ENCODE measurements at regions of chr17 and their contacts with region 1.

Region 1: DNA sequence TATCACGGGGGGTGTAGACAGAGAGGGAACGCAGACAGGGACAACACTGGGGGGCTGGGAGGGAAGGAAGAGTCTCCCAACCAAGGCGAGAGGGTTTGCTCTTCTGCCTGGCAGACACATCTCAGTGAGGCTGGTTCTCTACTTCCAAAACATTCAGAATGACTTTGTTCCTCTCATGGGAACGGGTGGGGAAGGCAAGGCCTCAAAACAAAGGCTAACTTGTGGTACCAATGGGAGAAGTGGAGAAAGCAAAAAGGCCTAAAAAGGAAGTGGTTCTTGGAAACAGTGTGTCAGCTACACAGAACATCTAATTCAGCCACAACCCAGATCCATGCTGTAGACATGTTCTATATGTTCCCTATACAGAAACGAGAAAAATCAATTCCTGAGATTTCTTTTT is 7.5 kb downstream of the FLOT2 start:
- DNase-seq: peak in 1 of 5 donors; percentile 3
- ATAC-seq: peak in 1 of 4 donors; percentile 22
- H3K4me3 ChIP-seq: no peak overlapping the region
- H3K27ac ChIP-seq: peak overlapping the region in 2 of 12 donors; percentile 32 to 42
- H3K4me1 ChIP-seq: peaks cover 3 to 48% (median 17%) of the 10 kb centered on the region in 12 donors
- H3K27me3 ChIP-seq: no peaks in the 10 kb centered on the region
- CTCF ChIP-seq: no peak
- POLR2A ChIP-seq: no peak

Region 2: DNA sequence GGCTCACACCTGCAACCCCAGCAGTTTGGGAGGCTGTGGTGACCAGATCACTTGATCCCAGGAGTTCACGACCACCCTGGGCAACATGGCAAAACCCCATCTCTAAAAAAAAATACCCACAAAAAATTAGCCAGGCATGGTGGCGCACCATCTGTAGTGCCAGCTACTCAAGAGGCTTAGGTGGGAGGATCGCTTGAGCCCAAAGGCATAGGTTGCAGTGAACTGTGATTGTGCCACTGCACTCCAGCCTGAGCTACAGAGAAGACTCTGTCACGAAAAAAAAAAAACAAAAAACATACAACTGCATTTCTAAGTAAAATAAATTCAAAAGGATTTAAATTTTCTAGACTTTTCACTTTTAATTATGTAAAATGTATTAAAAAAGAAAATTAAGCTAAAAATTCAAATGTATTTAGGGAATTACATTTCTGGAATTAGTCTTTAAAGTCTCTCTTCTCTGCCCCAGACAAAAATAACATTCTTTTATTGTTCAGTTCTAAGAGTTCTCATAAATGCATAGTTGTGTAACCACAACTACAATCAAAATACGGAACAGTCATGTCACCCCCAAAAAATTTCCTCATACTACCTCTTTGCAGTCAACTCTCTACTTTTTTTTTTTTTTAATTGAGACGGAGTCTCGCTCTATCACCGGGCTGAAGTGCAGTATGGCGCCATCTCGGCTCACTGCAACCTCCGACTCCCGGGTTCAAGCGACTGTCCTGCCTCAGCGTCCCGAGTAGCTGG is 61.5 kb before region 1 on chr17:
- intact Hi-C with region 1: loop called in 1 of 10 experiments (anchors 10 kb)
- DNase-seq: peak in 1 of 5 donors; percentile 19
- ATAC-seq: no peak
- H3K4me3 ChIP-seq: no peak overlapping the region
- H3K27ac ChIP-seq: no peak overlapping the region
- H3K4me1 ChIP-seq: peaks cover 0 to 6% (median 0%) of the 10 kb centered on the region in 12 donors
- H3K27me3 ChIP-seq: no peaks in the 10 kb centered on the region
- CTCF ChIP-seq: no peak
- POLR2A ChIP-seq: no peak

Measured in heart left ventricle (tissue), 16 donors.